Activated T-helper 1 cell treated with anti-CD3 and anti-CD28 coated beads, Interleukin-12 subunit alpha, Interleukin-12 subunit beta, Interleukin-2, Interleukin-4 antibody, amounts not matched to agents 30 ng/mL and 10 ng/mL and 1 ng/mL, durations not matched to agents 14 hours and 24 hours and 36 hours (primary cell): ENCODE measurements at regions of chr17 and their contacts with region 1.

Region 1: GRCh38 chr17:64975329-64976087 is 56.2 kb upstream of the LRRC37A3 start:
- DNase-seq: peak; percentile 98
- H3K4me3 Mint-ChIP-seq: peak overlapping the region; percentile 74
- H3K27ac Mint-ChIP-seq: peak overlapping the region; percentile 99
- H3K4me1 Mint-ChIP-seq: peaks cover 60% of the 10 kb centered on the region
- H3K27me3 Mint-ChIP-seq: no peaks in the 10 kb centered on the region

Region 2: GRCh38 chr17:64547319-64547718 is 428.2 kb before region 1 on chr17:
- intact Hi-C with region 1: no loop called
- DNase-seq: no peak
- H3K4me3 Mint-ChIP-seq: no peak overlapping the region
- H3K27ac Mint-ChIP-seq: no peak overlapping the region
- H3K4me1 Mint-ChIP-seq: no peaks in the 10 kb centered on the region
- H3K27me3 Mint-ChIP-seq: no peaks in the 10 kb centered on the region

Region 3: DNA sequence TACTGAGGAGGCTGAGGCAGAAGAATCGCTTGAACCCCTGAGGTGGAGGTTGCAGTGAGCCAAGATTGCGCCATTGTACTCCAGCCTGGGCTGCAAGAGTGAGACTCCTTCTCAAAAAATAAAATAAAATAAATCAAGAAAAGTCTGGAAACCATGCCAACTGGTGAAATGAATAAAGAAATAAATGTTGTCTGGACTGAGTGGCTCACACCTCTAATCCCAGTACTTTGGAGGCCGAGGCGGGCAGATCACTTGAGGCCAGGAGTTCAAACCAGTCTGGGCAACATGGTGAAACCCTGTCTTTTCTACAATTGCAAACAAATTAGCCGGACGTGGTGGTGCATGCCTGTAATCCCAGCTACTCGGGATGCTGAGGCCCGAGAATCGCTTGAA is 55.5 kb before region 1 on chr17:
- intact Hi-C with region 1: loop called (anchors 2 kb)
- DNase-seq: no peak
- H3K4me3 Mint-ChIP-seq: peak overlapping the region; percentile 89
- H3K27ac Mint-ChIP-seq: peak overlapping the region; percentile 87
- H3K4me1 Mint-ChIP-seq: peaks cover 21% of the 10 kb centered on the region
- H3K27me3 Mint-ChIP-seq: peaks cover 2% of the 10 kb centered on the region